Panc1 (cell line): ENCODE measurements at regions of chr3 and their contacts with region 1.

Region 1: DNA sequence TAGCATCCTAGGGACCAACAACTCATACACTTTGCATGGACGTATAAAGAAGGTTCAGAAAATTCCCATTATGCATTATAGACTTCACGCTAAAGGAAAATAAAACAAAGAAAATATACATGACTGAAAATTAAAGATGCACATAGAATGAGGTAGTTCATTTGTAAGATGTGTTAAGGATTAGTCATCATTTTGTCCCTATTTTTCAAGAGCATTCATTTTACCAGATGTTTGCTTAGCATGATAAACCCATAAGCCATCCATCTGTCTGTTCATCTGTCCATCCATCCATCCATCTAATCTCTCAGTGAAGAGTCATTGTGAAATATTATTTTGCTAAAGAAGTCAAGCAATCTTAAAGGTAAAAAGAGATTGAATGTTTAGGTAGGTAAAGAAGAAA is 80.3 kb downstream of the TFG start:
- DNase-seq: no peak
- ATAC-seq: no peak
- H3K4me3 ChIP-seq: no peak overlapping the region
- H3K27ac ChIP-seq: no peak overlapping the region
- H3K4me1 ChIP-seq: no peaks in the 10 kb centered on the region
- H3K27me3 ChIP-seq: peaks cover 3% of the 10 kb centered on the region; the same call in 1 of the 2 replicates
- CTCF ChIP-seq: no peak

Region 2: GRCh38 chr3:99833617-99834205 is 955.9 kb before region 1 on chr3:
- CTCF ChIA-PET with region 1: interaction called, 10 read pairs
- POLR2A ChIA-PET with region 1: no interaction called
- in situ Hi-C with region 1: no loop called
- intact Hi-C with region 1: no loop called
- DNase-seq: no peak
- ATAC-seq: no peak
- H3K4me3 ChIP-seq: no peak overlapping the region
- H3K27ac ChIP-seq: no peak overlapping the region; the same call in 1 of the 2 replicates
- H3K4me1 ChIP-seq: no peaks in the 10 kb centered on the region
- H3K27me3 ChIP-seq: no peaks in the 10 kb centered on the region
- CTCF ChIP-seq: no peak

Region 3: DNA sequence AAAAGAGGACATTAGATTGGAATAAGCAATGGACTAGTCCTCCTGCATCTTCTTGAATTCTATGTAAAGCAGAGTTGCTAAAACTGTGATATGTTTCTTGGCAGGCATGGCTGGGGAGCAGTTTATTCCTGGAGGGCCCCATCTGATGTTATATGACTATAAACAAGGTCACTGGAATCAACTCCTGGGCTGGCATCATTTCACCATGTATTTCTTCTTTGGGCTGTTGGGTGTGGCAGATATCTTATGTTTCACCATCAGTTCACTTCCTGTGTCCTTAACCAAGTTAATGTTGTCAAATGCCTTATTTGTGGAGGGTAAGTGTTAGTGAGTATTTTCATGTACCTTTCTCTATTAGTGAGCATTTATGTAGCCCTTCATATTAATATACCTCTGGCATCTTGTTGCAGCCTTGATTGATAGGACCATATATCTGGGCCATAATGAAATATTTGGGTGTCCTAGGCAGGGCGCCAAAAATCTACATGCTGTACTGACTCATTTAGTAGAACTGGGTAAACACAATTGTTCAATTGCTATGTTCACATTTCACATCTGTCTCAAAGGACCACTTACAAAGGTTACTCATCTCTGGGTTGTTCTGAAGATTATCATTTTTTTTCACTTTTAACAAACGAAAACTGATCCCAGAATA is 232.8 kb before region 1 on chr3:
- CTCF ChIA-PET with region 1: no interaction called
- POLR2A ChIA-PET with region 1: no interaction called
- in situ Hi-C with region 1: no loop called
- intact Hi-C with region 1: no loop called
- DNase-seq: no peak
- ATAC-seq: no peak
- H3K4me3 ChIP-seq: no peak overlapping the region
- H3K27ac ChIP-seq: no peak overlapping the region
- H3K4me1 ChIP-seq: no peaks in the 10 kb centered on the region
- H3K27me3 ChIP-seq: no peaks in the 10 kb centered on the region
- CTCF ChIP-seq: no peak